Endothelial cell of umbilical vein (primary cell): ENCODE measurements at regions of chr15 and their contacts with region 1.

Region 1: DNA sequence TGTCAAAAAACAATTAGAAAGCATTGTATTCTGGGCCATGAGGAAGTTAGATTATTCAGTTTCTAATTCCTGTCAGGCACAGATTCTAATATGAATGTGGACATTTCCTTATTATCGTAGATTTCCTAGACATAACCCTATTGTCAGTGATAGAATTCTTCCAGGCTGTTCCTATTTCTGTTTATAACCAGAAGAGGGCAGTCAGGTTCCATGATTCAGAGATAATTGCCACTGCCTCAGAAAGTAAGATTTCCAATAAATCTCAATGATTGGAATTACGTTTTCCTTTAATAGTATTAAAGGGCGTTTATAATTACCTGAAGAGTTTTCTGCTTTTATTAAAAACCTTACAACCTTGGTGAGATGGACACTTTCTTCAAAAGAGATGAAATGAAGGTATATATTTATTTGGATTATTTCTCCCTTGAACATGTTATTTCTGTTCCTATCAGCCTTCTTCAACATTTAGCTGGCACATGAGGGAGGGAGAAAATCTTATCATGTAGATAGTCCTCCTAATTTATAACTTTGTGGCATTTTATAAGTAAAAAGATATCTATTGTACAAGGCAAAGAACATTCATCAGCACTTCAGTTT is 439.2 kb downstream of the MCTP2 start:
- DNase-seq: peak; percentile 84
- H3K4me3 ChIP-seq: no peak overlapping the region
- H3K27ac ChIP-seq: peak overlapping the region; percentile 72
- H3K4me1 ChIP-seq: peaks cover 33% of the 10 kb centered on the region
- H3K27me3 ChIP-seq: no peaks in the 10 kb centered on the region
- CTCF ChIP-seq: peak; percentile 38 to 45
- POLR2A ChIP-seq: no peak

Region 2: GRCh38 chr15:94324117-94324826 is 346.3 kb before region 1 on chr15:
- CTCF ChIA-PET with region 1: no interaction called
- POLR2A ChIA-PET with region 1: no interaction called
- dilution Hi-C with region 1: no loop called
- intact Hi-C with region 1: loop called (anchors 2 kb)
- DNase-seq: peak; percentile 62
- H3K4me3 ChIP-seq: no peak overlapping the region
- H3K27ac ChIP-seq: no peak overlapping the region
- H3K4me1 ChIP-seq: no peaks in the 10 kb centered on the region
- H3K27me3 ChIP-seq: no peaks in the 10 kb centered on the region
- CTCF ChIP-seq: peak; percentile 79 to 84
- POLR2A ChIP-seq: no peak

Region 3: DNA sequence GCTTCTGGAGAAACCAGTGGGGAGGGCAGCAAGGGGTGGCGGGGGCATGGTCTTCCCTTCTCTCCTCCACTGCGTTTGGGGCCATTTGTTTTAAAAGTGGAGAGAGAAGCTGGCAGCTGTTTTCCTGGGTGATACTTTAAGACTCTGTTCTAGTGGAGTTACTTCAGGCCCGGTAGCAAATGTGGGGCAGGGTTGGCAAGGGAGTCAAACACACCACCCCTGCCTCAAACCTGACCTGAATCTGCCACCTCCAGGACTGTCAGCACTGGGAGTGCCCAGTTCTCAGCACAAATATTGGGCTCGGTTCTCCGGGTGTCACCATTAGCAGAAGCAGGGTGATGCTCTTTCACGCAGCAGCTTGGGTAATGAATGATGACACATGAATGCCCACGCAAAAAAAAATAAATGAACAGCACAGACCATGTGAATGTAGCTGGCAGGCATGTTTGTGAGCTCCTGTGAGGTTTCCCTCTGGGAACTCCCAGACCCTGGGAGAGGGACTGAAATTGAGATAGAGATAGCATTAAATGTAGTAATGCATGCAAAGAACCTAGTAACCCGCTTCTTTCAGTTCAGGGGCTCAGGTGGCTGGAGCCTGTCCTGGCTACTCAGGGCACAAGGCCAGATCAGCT is 15.2 kb before region 1 on chr15:
- CTCF ChIA-PET with region 1: interaction called, 24 read pairs
- POLR2A ChIA-PET with region 1: no interaction called
- dilution Hi-C with region 1: no loop called
- intact Hi-C with region 1: no loop called
- DNase-seq: no peak
- H3K4me3 ChIP-seq: no peak overlapping the region
- H3K27ac ChIP-seq: no peak overlapping the region
- H3K4me1 ChIP-seq: no peaks in the 10 kb centered on the region
- H3K27me3 ChIP-seq: no peaks in the 10 kb centered on the region
- CTCF ChIP-seq: no peak
- POLR2A ChIP-seq: no peak

Region 4: DNA sequence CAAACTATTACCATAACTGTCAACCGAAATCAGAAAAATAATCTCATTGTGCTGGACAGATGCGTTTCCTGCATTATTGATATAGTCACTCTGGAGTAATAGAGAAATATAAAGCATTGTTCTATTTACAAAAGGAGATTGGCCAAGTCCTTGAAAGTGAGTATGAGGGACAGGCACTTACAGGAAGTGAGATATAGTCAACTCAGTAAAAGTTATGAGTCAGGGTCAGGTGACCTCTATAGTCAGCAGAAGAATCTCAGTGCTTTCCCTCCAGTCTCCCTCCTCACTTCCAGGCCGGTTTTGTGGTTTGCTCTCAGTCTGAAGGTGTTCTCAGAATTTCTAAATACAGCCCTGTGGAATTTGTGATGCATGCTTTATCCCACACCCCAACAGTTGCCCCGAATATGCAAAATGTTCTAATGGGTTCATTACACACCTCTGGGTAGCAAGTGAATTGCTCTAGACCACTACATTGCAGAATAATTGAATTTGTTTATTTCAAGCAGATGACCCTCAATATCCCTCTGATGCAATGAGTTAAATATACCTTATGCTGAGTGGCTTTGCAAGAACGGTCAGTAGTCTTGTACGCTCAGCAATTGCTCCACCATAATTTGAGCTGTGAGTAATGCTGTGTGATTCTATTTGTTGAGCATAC is 348.5 kb after region 1 on chr15:
- CTCF ChIA-PET with region 1: interaction called, 160 read pairs
- POLR2A ChIA-PET with region 1: interaction called, 4 read pairs
- dilution Hi-C with region 1: no loop called
- intact Hi-C with region 1: loop called (anchors 1 kb)
- DNase-seq: peak; percentile 86
- H3K4me3 ChIP-seq: peak overlapping the region in 1 of 3 experiments; percentile 55
- H3K27ac ChIP-seq: peak overlapping the region; percentile 83
- H3K4me1 ChIP-seq: peaks cover 39% of the 10 kb centered on the region
- H3K27me3 ChIP-seq: no peaks in the 10 kb centered on the region
- CTCF ChIP-seq: no peak
- POLR2A ChIP-seq: no peak

Region 5: DNA sequence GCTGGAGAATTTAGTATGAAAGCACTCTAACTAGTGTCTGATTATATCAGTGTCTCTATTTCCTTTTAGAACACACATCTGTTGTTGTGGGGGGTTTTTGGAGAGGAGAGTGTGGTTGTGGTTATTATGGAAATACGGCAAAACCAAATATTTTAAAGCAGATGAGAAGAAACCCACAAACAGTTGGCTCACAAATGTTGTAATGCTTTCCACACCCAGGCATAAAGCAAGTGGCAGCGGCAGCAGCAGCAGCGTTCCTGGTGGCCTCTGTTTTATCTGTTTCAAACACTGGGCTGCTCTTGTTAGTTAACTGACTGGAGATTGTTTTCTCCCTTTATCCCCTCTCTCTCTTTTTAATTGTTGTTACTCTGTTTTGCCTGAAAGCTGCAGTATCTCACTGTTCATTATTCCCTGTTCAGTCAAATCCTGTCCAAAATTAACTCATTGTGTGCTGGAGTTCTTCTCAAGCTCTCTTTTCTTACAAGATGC is 614.4 kb after region 1 on chr15:
- CTCF ChIA-PET with region 1: interaction called, 7 read pairs
- POLR2A ChIA-PET with region 1: no interaction called
- dilution Hi-C with region 1: no loop called
- intact Hi-C with region 1: loop called (anchors 1 kb)
- DNase-seq: peak; percentile 88
- H3K4me3 ChIP-seq: no peak overlapping the region
- H3K27ac ChIP-seq: peak overlapping the region; percentile 15
- H3K4me1 ChIP-seq: peaks cover 63% of the 10 kb centered on the region
- H3K27me3 ChIP-seq: no peaks in the 10 kb centered on the region
- CTCF ChIP-seq: peak; percentile 21 to 28
- POLR2A ChIP-seq: no peak

Region 6: GRCh38 chr15:95459273-95459672 is 788.7 kb after region 1 on chr15:
- CTCF ChIA-PET with region 1: no interaction called
- POLR2A ChIA-PET with region 1: no interaction called
- dilution Hi-C with region 1: no loop called
- intact Hi-C with region 1: loop called (anchors 5 kb)
- DNase-seq: peak; percentile 90
- H3K4me3 ChIP-seq: peak overlapping the region in 1 of 3 experiments; percentile 51
- H3K27ac ChIP-seq: peak overlapping the region; percentile 85
- H3K4me1 ChIP-seq: peaks cover 41% of the 10 kb centered on the region
- H3K27me3 ChIP-seq: no peaks in the 10 kb centered on the region
- CTCF ChIP-seq: no peak
- POLR2A ChIP-seq: peak; percentile 65

Region 7: GRCh38 chr15:96321639-96322535 is 1651.4 kb after region 1 on chr15:
- CTCF ChIA-PET with region 1: interaction called, 30 read pairs
- POLR2A ChIA-PET with region 1: interaction called, 6 read pairs
- dilution Hi-C with region 1: no loop called
- intact Hi-C with region 1: loop called (anchors 1 kb)
- DNase-seq: peak; percentile 67
- H3K4me3 ChIP-seq: peak overlapping the region; percentile 18 to 89 (median 29)
- H3K27ac ChIP-seq: peak overlapping the region; percentile 85
- H3K4me1 ChIP-seq: peaks cover 74% of the 10 kb centered on the region
- H3K27me3 ChIP-seq: no peaks in the 10 kb centered on the region
- CTCF ChIP-seq: peak; percentile 7 to 27
- POLR2A ChIP-seq: no peak